ENCODE measurements at regions of chr4 and their contacts with region 1.

Region 1: GRCh38 chr4:76233957-76234678 is 17.4 kb upstream of the FAM47E start:
- DNase-seq: no peak
- H3K4me3 ChIP-seq: no peak overlapping the region
- H3K27ac ChIP-seq: no peak overlapping the region
- H3K4me1 ChIP-seq: peaks cover 29% of the 10 kb centered on the region
- H3K27me3 ChIP-seq: no peaks in the 10 kb centered on the region
- CTCF ChIP-seq: no peak

Region 2: DNA sequence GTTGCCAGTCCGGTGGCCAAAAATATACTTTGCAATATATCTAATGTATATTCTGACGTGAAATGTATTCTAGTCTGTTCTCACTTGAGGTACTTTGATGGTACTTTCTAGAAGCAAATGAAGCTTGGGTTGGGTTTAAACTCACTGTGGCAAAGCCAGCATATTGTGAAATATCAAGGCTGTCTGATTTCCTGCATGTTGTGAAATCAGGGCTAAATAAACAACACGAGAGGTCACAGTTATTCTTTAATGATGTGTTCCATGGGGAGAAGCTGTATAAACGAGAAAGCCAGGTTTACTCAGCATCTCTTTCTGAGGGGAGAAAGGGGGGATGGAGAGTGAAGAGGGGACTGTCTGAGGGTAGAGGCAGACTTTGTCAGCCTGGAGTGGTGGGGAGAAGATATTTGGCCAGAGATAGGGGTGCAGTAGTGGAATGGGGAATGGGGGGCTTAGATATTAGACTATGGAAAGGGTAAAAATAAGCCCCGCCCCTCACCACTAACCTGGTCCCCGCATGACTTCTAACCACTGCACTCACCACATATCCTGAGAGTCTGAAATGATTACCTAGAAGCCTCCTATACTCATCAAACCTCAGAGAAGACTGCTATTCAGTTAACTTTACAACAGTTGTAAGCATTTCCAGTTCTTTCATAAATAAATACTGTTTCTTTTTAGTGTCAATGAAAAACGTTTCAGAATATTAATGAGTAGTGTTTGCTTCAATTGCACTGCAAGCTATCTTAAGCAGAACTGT is 14.6 kb before region 1 on chr4:
- CTCF ChIA-PET with region 1: interaction called, 4 read pairs
- dilution Hi-C with region 1: no loop called
- in situ Hi-C with region 1: no loop called
- intact Hi-C with region 1: loop called (anchors 2 kb)
- DNase-seq: peak; percentile 61
- H3K4me3 ChIP-seq: no peak overlapping the region
- H3K27ac ChIP-seq: no peak overlapping the region
- H3K4me1 ChIP-seq: peaks cover 11% of the 10 kb centered on the region
- H3K27me3 ChIP-seq: no peaks in the 10 kb centered on the region
- CTCF ChIP-seq: no peak

Region 3: GRCh38 chr4:76601791-76602190 is 367.7 kb after region 1 on chr4:
- CTCF ChIA-PET with region 1: no interaction called
- dilution Hi-C with region 1: no loop called
- in situ Hi-C with region 1: no loop called
- intact Hi-C with region 1: no loop called
- DNase-seq: no peak
- H3K4me3 ChIP-seq: no peak overlapping the region
- H3K27ac ChIP-seq: no peak overlapping the region
- H3K4me1 ChIP-seq: peaks cover 11% of the 10 kb centered on the region
- H3K27me3 ChIP-seq: no peaks in the 10 kb centered on the region
- CTCF ChIP-seq: no peak